IMR-90 (cell line): ENCODE measurements at regions of chr10 and their contacts with region 1.

Region 1: GRCh38 chr10:61140765-61141392 is 196.9 kb upstream of the RHOBTB1 start:
- DNase-seq: peak; percentile 77
- ATAC-seq: peak; percentile 84
- H3K4me3 ChIP-seq: no peak overlapping the region
- H3K27ac ChIP-seq: no peak overlapping the region
- H3K4me1 ChIP-seq: peaks cover 15% of the 10 kb centered on the region
- H3K27me3 ChIP-seq: 0 out of 2 replicates have a peak, but pooled peaks cover 1% of the 10 kb centered on the region
- CTCF ChIP-seq: peak; percentile 68
- POLR2A ChIP-seq: no peak
- RAD21 ChIP-seq: peak; percentile 66

Region 2: GRCh38 chr10:60237977-60238758 is 902.7 kb before region 1 on chr10:
- CTCF ChIA-PET with region 1: no interaction called
- POLR2A ChIA-PET with region 1: no interaction called
- dilution Hi-C with region 1: no loop called
- in situ Hi-C with region 1: no loop called
- intact Hi-C with region 1: no loop called
- DNase-seq: peak; percentile 70
- ATAC-seq: peak; percentile 99
- H3K4me3 ChIP-seq: no peak overlapping the region
- H3K27ac ChIP-seq: no peak overlapping the region
- H3K4me1 ChIP-seq: no peaks in the 10 kb centered on the region; the same call in 1 of the 2 replicates
- H3K27me3 ChIP-seq: no peaks in the 10 kb centered on the region
- CTCF ChIP-seq: peak; percentile 56
- POLR2A ChIP-seq: no peak
- RAD21 ChIP-seq: peak; percentile 70

Region 3: DNA sequence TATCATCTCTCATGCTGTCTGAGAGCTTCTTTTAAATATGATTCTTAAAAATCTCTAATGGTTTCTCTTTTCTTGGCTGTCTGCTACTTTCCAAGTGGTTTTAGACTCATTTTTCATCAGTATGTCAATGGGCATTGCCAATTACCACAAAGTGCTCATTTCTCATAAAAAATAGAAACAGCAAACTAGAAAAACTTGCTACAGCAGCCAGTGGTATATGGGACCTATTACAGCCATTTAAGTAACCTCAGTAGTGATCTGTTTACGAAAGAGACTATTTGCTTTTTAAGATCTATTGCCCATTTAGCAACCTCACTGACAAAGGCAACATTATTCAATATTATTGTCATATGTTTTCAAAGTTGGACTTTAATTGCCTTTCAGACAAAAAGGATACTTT is 10.2 kb after region 1 on chr10:
- CTCF ChIA-PET with region 1: interaction called, 12 read pairs
- POLR2A ChIA-PET with region 1: no interaction called
- dilution Hi-C with region 1: no loop called
- in situ Hi-C with region 1: no loop called
- intact Hi-C with region 1: no loop called
- DNase-seq: no peak
- ATAC-seq: no peak
- H3K4me3 ChIP-seq: no peak overlapping the region
- H3K27ac ChIP-seq: no peak overlapping the region
- H3K4me1 ChIP-seq: no peaks in the 10 kb centered on the region
- H3K27me3 ChIP-seq: no peaks in the 10 kb centered on the region; the same call in 1 of the 2 replicates
- CTCF ChIP-seq: no peak
- POLR2A ChIP-seq: no peak
- RAD21 ChIP-seq: no peak

Region 4: DNA sequence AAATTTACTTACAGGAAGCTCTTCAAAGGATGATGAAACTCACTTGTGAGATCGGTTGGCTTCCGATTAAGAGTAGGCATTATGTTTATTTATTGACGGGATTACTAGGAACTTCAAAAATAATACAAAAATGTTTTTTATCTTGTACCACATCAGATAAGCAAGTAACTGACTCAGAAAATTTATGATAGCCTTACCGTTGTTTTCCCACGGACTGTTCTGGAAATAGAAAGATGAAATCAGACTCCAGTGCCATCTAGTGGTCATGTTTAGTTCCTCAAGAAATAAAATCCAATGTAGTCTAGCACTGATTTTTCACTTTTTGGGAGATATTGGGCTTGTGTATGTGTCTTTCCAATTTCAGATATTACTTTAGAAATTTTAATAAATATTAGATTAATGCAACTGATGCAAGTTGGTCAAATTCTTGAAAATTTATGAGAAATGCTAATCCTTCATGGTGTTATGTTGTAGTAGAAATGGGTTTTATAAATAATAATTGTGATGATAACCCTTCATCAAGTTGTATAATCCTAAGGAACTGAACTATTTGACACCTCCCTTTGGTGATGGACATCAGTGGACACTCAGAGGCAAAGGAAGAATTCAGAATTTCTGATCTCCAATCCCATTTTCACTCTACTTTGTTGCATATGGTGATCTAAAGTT is 143.5 kb after region 1 on chr10:
- CTCF ChIA-PET with region 1: no interaction called
- POLR2A ChIA-PET with region 1: no interaction called
- dilution Hi-C with region 1: no loop called
- in situ Hi-C with region 1: no loop called
- intact Hi-C with region 1: loop called (anchors 2 kb)
- DNase-seq: peak; percentile 77
- ATAC-seq: peak; percentile 62
- H3K4me3 ChIP-seq: no peak overlapping the region
- H3K27ac ChIP-seq: no peak overlapping the region
- H3K4me1 ChIP-seq: no peaks in the 10 kb centered on the region
- H3K27me3 ChIP-seq: no peaks in the 10 kb centered on the region
- CTCF ChIP-seq: peak; percentile 78
- POLR2A ChIP-seq: no peak
- RAD21 ChIP-seq: peak; percentile 72

Region 5: DNA sequence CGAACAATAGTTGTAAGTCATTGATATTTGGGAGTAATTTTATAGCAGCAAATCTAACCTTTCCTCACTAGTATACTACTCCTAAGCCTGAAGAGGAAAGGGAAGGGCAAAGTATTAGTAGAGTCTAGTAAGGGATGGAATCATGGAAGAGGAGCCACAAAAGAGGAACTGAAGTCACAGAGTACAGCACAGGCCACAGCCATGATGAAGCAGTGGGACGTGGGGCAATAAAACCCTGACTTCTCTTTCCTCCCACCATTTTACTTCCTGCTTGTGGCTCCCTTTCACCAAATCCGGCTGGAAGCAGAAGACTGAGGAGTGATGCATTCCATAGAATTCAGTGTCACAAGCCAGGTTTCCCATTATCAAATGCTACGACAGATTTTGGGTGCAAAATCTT is 580.6 kb after region 1 on chr10:
- CTCF ChIA-PET with region 1: no interaction called
- POLR2A ChIA-PET with region 1: no interaction called
- dilution Hi-C with region 1: no loop called
- in situ Hi-C with region 1: loop called (anchors 10 kb)
- intact Hi-C with region 1: no loop called
- DNase-seq: no peak
- ATAC-seq: no peak
- H3K4me3 ChIP-seq: no peak overlapping the region
- H3K27ac ChIP-seq: no peak overlapping the region
- H3K4me1 ChIP-seq: no peaks in the 10 kb centered on the region
- H3K27me3 ChIP-seq: no peaks in the 10 kb centered on the region
- CTCF ChIP-seq: no peak
- POLR2A ChIP-seq: no peak
- RAD21 ChIP-seq: no peak

Region 6: GRCh38 chr10:61733358-61733940 is 592.6 kb after region 1 on chr10:
- CTCF ChIA-PET with region 1: no interaction called
- POLR2A ChIA-PET with region 1: no interaction called
- dilution Hi-C with region 1: no loop called
- in situ Hi-C with region 1: loop called (anchors 10 kb)
- intact Hi-C with region 1: loop called (anchors 1 kb)
- DNase-seq: peak; percentile 64
- ATAC-seq: peak; percentile 54; the same call in 1 of the 2 replicates
- H3K4me3 ChIP-seq: no peak overlapping the region
- H3K27ac ChIP-seq: no peak overlapping the region
- H3K4me1 ChIP-seq: no peaks in the 10 kb centered on the region
- H3K27me3 ChIP-seq: no peaks in the 10 kb centered on the region
- CTCF ChIP-seq: peak; percentile 72
- POLR2A ChIP-seq: 0 out of 2 replicates have a peak, but pooled peaks have one; percentile 22
- RAD21 ChIP-seq: peak; percentile 79